Naive thymus-derived CD4-positive, alpha-beta T cell (primary cell): ENCODE measurements at regions of chrX and their contacts with region 1.

Region 1: DNA sequence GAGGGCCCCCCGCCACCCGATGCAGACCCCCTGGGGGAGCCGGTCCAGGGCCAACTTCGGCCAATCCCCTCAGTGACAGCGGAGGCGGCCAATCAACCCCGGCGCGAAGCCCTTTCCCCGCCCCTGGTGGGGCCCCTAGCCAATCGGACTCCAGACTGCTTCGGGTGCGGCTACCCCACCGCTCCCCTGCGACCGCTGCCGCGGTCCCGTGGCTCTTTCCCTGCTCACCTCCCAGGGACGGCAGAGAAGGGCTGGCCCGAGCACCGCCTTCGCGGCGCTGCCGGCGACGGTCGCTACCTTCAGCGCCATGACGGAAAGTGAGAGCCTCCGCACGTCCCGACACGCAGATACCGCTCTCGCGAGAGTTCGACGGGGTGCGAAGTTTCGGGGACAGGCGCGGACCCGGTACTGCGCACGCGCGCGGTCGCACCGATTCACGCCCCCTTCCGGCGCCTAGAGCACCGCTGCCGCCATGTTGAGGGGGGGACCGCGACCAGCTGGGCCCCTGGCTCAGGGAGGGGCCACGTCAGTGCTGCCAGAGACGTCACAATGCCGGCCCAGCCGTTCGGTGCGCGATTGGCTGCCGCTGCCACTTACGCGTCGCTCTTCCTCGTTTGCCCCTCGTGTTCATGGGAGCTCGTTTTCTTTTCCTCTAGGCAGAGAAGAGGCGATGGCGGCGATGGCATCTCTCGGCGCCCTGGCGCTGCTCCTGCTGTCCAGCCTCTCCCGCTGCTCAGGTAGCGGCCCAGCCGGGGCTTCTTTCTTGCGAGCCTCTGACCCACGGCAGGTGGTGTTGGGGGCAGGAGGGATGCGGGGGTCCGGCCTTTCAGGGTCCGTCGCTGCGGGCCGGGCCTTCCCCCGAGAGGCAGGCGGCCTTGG is at the starts of genes IDH3G and SSR4:
- DNase-seq: peak; percentile 83 to 96 (median 93)
- ATAC-seq: peak; percentile 97
- H3K4me3 ChIP-seq: peak within 1 kb of the TSS; percentile 75
- H3K4me3 Mint-ChIP-seq: peak within 1 kb of the TSS; percentile 86 to 95 (median 92)
- H3K27ac ChIP-seq: peak within 1 kb of the TSS; percentile 97
- H3K27ac Mint-ChIP-seq: peak within 1 kb of the TSS; percentile 86 to 95 (median 92)
- H3K4me1 ChIP-seq: peaks cover 8 to 12% of the 10 kb centered on the region in 2 donors
- H3K4me1 Mint-ChIP-seq: peaks cover 0 to 39% (median 25%) of the 10 kb centered on the region in 7 donors
- H3K27me3 ChIP-seq: no peaks in the 10 kb centered on the region
- H3K27me3 Mint-ChIP-seq: no peaks in the 10 kb centered on the region
- total RNA-seq, gene IDH3G: 44.1 to 73.1 (median 57.0) TPM
- total RNA-seq, gene SSR4: 156 to 299 (median 168) TPM

Region 2: DNA sequence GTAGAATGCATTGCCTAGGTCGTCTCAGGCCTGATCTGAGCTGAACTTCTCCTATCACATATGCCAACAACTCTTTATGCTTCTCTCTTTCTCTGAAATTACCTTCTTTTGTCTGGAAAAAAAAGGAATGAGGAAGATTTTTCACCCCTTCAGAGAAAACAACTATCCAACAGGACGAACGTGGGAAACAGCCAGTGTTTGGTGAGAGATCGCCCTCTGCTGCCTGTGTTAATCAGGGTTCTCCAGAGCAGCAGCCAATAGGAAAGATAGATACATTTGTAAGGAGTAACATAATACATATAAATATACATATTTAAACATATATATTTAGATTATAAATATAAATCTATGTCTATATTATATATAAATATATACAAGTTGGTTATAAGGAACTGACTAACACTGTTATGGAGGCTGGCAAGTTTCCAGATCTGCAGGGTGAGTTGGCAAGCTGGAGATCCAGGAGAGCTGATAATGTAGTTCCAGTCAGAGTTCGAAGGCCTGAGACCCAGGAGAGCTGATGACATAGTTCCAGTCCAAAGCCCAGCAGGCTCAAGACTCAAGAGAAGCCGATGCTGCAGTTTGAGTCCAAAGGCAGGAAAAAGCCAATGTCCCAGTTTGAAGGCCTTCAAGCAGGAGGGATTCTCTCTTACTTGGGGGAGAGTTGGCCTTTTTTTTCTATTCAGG is 977.0 kb before region 1 on chrX:
- CTCF ChIA-PET with region 1: no interaction called
- POLR2A ChIA-PET with region 1: no interaction called
- intact Hi-C with region 1: no loop called
- DNase-seq: no peak
- ATAC-seq: no peak
- H3K4me3 ChIP-seq: no peak overlapping the region
- H3K4me3 Mint-ChIP-seq: no peak overlapping the region
- H3K27ac ChIP-seq: no peak overlapping the region
- H3K27ac Mint-ChIP-seq: no peak overlapping the region
- H3K4me1 ChIP-seq: no peaks in the 10 kb centered on the region
- H3K4me1 Mint-ChIP-seq: peaks cover 0 to 16% (median 5%) of the 10 kb centered on the region in 7 donors
- H3K27me3 ChIP-seq: no peaks in the 10 kb centered on the region
- H3K27me3 Mint-ChIP-seq: peaks cover 0 to 10% (median 8%) of the 10 kb centered on the region in 5 donors

Region 3: DNA sequence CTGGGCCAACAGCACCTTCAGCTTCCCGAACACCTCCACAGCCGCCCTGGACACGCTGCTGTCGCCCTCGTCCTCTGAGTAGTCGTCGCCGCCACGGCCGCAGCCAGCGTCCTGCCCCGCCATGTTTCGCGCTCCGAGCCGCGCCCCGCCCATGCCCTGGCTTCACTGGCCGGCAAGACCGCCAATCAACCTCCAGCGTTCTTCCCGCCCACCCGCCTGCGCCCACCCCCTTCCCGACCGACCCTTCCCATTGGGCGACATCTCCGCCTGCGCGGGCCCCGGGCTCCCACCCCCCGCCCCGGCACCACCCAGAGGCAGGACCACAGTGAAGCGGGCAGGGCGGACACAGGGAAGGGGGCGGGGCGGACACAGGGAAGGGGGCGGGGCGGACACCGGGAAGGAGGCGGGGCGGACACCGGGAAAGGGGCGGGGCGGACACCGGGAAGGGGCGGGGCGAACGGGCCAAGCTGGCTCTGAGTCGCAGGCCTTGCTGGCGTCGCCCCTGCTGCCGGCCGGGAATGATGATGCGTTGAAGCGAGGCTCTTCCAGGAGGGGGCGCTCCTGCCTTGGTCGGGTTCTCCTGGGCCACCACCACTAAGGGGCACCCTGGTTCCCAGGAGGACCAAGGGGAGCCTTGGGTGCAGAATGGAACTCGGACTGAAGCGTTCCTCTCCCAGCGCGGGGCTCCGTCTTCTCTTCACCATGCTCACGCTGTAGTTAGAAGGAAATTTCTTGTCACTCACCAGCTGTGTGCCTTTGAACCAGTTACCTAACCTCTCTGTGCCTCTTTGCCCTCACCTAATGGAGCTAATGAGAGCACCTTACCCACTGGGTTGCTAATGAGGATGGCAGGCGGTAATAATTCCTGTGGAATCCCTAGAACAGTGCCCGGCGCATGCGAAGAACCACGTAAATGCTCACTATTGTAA is 323.6 kb before region 1 on chrX and contains the start of gene HAUS7:
- CTCF ChIA-PET with region 1: no interaction called
- POLR2A ChIA-PET with region 1: no interaction called
- intact Hi-C with region 1: loop called (anchors 1 kb)
- DNase-seq: peak; percentile 73 to 88 (median 85)
- ATAC-seq: peak; percentile 92
- H3K4me3 ChIP-seq: peak within 1 kb of the TSS; percentile 74
- H3K4me3 Mint-ChIP-seq: peak within 1 kb of the TSS; percentile 64 to 88 (median 82)
- H3K27ac ChIP-seq: peak within 1 kb of the TSS; percentile 68
- H3K27ac Mint-ChIP-seq: peak within 1 kb of the TSS in 8 of 9 donors; percentile 62 to 85 (median 82)
- H3K4me1 ChIP-seq: peaks cover 3 to 17% of the 10 kb centered on the region in 2 donors
- H3K4me1 Mint-ChIP-seq: peaks cover 0 to 30% (median 12%) of the 10 kb centered on the region in 7 donors
- H3K27me3 ChIP-seq: no peaks in the 10 kb centered on the region
- H3K27me3 Mint-ChIP-seq: no peaks in the 10 kb centered on the region
- total RNA-seq, gene HAUS7: 23.2 to 44.8 (median 31.4) TPM

Region 4: DNA sequence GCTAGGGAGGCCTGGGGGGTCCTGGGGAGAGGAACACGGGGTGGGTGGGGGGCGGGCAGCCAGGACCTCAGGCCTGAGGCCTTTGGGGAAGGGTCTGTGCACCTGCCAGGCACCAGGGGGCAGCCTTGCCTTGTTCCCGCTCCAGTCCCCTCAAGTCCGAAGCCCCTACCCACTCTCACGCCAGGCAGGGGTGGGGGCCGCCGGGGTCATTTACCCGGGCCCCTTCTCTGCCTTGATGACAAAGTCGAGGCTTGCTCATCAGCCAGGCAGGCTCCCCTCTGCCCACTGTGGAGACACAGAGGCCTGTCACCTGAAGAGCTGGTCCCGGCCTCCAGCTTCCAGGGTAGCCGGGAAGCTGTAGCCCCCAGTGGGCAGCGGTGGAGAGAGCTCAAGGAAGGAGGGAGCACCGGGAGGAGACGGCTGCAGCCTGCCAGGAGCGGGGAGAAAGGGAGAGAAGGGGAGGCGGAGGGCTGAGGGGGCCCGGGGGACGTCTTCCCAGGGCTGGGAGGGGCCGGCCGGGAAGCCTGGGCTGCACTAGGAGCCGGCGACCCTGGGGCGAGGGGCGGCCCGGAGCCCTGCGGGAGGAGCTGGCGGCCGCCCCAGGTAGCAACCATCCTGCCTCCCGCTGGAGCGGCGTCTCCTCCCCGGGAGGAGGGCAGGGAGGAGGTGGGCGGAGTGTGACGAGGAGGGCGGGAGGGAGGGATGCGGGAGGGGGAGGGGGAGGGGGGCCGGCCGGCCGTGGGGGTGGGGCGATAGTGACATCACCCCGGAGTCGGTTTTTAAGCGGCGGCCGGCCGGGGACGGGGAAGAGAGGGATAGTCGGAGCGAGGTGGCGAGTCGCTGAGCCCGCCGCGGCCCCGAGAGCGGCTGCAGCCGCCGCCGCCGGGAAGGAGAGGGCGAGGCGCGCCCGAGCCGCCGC is 106.9 kb before region 1 on chrX and contains the start of gene SLC6A8:
- CTCF ChIA-PET with region 1: no interaction called
- POLR2A ChIA-PET with region 1: no interaction called
- intact Hi-C with region 1: loop called in 1 of 2 experiments (anchors 1 kb)
- DNase-seq: peak in 4 of 9 donors; percentile 17 to 56 (median 33)
- ATAC-seq: peak; percentile 51
- H3K4me3 ChIP-seq: no peak within 1 kb of the TSS
- H3K4me3 Mint-ChIP-seq: peak within 1 kb of the TSS; percentile 49 to 84 (median 75)
- H3K27ac ChIP-seq: no peak within 1 kb of the TSS
- H3K27ac Mint-ChIP-seq: peak within 1 kb of the TSS in 1 of 9 donors; percentile 3
- H3K4me1 ChIP-seq: no peaks in the 10 kb centered on the region
- H3K4me1 Mint-ChIP-seq: peaks cover 0 to 4% (median 0%) of the 10 kb centered on the region in 7 donors
- H3K27me3 ChIP-seq: no peaks in the 10 kb centered on the region
- H3K27me3 Mint-ChIP-seq: peaks cover 0 to 26% (median 0%) of the 10 kb centered on the region in 5 donors
- total RNA-seq, gene SLC6A8: 0.14 to 2.6 (median 0.84) TPM

Region 5: DNA sequence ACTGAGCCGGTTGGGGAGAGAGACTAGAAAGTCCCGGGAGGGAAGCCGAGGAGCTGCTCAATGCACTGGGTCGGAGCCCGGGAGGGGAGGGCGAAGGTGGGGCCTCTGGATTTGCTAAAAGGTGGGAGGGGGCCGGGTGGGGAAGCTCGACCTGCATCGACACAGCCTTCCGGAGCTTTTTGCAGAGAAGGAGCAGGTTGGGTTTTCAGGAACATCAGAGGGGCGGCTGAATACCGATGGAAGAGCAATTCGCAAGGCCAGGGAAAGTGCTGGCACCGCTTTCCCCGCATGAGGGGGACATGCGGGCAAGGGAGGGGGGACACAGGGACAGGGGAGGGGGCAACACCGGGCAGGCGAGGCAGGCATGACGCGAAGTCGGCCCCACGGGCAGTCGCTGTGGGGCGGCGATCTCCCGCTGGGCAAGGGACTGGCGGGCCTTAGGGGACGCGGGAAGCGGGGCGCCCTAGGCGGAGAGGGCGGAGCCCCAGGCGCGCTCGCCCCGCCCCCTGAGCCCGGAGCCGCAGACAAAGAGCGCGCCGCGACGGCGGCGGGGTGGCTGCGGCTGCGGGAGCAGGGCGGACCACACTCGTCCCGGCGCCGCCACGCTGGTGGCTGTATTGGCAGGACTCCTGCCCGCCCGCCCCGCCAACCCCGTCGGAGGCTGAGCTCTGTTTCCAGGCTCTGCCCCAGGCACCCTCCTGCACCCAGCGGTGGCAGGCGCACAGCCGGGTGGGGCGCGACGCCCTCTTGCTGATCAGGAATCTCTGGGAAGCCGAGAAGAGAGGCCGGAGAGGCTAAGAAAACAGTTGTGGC is 24.5 kb after region 1 on chrX:
- CTCF ChIA-PET with region 1: no interaction called
- POLR2A ChIA-PET with region 1: interaction called, 10 read pairs
- intact Hi-C with region 1: loop called in 1 of 2 experiments (anchors 1 kb)
- DNase-seq: peak; percentile 25 to 71 (median 49)
- ATAC-seq: peak; percentile 76
- H3K4me3 ChIP-seq: peak overlapping the region; percentile 33
- H3K4me3 Mint-ChIP-seq: peak overlapping the region in 9 of 10 donors; percentile 48 to 69 (median 57)
- H3K27ac ChIP-seq: peak overlapping the region; percentile 51
- H3K27ac Mint-ChIP-seq: peak overlapping the region in 2 of 9 donors; percentile 55 to 87
- H3K4me1 ChIP-seq: peaks cover 39 to 44% of the 10 kb centered on the region in 2 donors
- H3K4me1 Mint-ChIP-seq: peaks cover 18 to 61% (median 40%) of the 10 kb centered on the region in 7 donors
- H3K27me3 ChIP-seq: no peaks in the 10 kb centered on the region
- H3K27me3 Mint-ChIP-seq: peaks cover 0 to 20% (median 0%) of the 10 kb centered on the region in 5 donors

Region 6: GRCh38 chrX:153900831-153901752 is 106.8 kb after region 1 on chrX:
- CTCF ChIA-PET with region 1: no interaction called
- POLR2A ChIA-PET with region 1: interaction called, 4 read pairs
- intact Hi-C with region 1: loop called in 1 of 2 experiments (anchors 2 kb)
- DNase-seq: peak in 8 of 9 donors; percentile 45 to 76 (median 64)
- ATAC-seq: peak; percentile 91
- H3K4me3 ChIP-seq: no peak overlapping the region
- H3K4me3 Mint-ChIP-seq: peak overlapping the region; percentile 51 to 84 (median 64)
- H3K27ac ChIP-seq: no peak overlapping the region
- H3K27ac Mint-ChIP-seq: peak overlapping the region in 8 of 9 donors; percentile 33 to 88 (median 71)
- H3K4me1 ChIP-seq: peaks cover 25 to 35% of the 10 kb centered on the region in 2 donors
- H3K4me1 Mint-ChIP-seq: peaks cover 16 to 54% (median 43%) of the 10 kb centered on the region in 7 donors
- H3K27me3 ChIP-seq: no peaks in the 10 kb centered on the region
- H3K27me3 Mint-ChIP-seq: peaks cover 0 to 5% (median 0%) of the 10 kb centered on the region in 5 donors

Region 7: GRCh38 chrX:153947009-153947769 is 152.9 kb after region 1 on chrX:
- CTCF ChIA-PET with region 1: no interaction called
- POLR2A ChIA-PET with region 1: no interaction called
- intact Hi-C with region 1: loop called in 1 of 2 experiments (anchors 1 kb)
- DNase-seq: peak; percentile 58 to 83 (median 78)
- ATAC-seq: peak; percentile 93
- H3K4me3 ChIP-seq: no peak overlapping the region
- H3K4me3 Mint-ChIP-seq: peak overlapping the region; percentile 0 to 69 (median 32)
- H3K27ac ChIP-seq: no peak overlapping the region
- H3K27ac Mint-ChIP-seq: peak overlapping the region; percentile 26 to 94 (median 87)
- H3K4me1 ChIP-seq: peaks cover 3 to 9% of the 10 kb centered on the region in 2 donors
- H3K4me1 Mint-ChIP-seq: peaks cover 6 to 30% (median 20%) of the 10 kb centered on the region in 7 donors
- H3K27me3 ChIP-seq: no peaks in the 10 kb centered on the region
- H3K27me3 Mint-ChIP-seq: no peaks in the 10 kb centered on the region

Region 8: DNA sequence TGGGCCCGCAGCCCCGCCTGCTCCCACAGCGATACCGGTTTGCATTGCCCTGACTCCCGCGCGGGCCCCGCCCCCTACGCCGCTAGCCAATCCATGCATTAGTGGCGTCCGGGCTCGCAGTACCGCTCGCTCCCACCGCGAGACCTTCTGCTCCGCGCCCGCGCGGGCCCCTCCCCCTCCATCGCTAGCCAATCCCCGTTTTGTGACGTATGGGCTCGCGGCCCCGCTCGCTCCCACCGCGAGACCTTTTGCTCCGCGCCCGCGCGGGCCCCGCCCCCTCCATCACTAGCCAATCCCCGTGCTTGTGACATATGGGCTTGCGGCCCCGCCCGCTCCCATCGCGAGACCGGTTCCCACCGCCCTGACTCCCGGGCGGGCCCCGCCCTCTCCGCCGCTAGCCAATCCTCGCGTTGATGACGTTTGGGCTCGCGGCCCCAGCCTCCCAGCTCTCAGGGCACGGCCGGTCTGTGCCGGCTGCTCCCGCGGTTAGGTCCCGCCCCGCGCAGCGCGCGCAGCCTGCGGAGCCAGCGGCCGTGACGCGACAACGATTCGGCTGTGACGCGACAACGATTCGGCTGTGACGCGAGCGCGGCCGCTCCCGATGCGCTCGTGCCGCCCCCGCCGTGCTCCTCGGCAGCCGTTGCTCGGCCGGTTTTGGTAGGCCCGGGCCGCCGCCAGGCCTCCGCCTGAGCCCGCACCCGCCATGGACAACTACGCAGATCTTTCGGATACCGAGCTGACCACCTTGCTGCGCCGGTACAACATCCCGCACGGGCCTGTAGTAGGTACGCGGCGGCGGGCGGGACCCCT is 584.7 kb after region 1 on chrX and contains the start of gene EMD:
- CTCF ChIA-PET with region 1: no interaction called
- POLR2A ChIA-PET with region 1: no interaction called
- intact Hi-C with region 1: loop called in 1 of 2 experiments (anchors 10 kb)
- DNase-seq: peak; percentile 88 to 98 (median 96)
- ATAC-seq: peak; percentile 87
- H3K4me3 ChIP-seq: peak within 1 kb of the TSS; percentile 68
- H3K4me3 Mint-ChIP-seq: peak within 1 kb of the TSS; percentile 73 to 88 (median 84)
- H3K27ac ChIP-seq: peak within 1 kb of the TSS; percentile 99
- H3K27ac Mint-ChIP-seq: peak within 1 kb of the TSS; percentile 72 to 95 (median 92)
- H3K4me1 ChIP-seq: peaks cover 10 to 18% of the 10 kb centered on the region in 2 donors
- H3K4me1 Mint-ChIP-seq: peaks cover 4 to 21% (median 12%) of the 10 kb centered on the region in 7 donors
- H3K27me3 ChIP-seq: no peaks in the 10 kb centered on the region
- H3K27me3 Mint-ChIP-seq: no peaks in the 10 kb centered on the region
- total RNA-seq, gene EMD: 53.5 to 141 (median 89.9) TPM